Activated CD4-positive, alpha-beta T cell treated with anti-CD3 and anti-CD28 coated beads for 36 hours (primary cell): ENCODE measurements at regions of chr20 and their contacts with region 1.

Region 1: DNA sequence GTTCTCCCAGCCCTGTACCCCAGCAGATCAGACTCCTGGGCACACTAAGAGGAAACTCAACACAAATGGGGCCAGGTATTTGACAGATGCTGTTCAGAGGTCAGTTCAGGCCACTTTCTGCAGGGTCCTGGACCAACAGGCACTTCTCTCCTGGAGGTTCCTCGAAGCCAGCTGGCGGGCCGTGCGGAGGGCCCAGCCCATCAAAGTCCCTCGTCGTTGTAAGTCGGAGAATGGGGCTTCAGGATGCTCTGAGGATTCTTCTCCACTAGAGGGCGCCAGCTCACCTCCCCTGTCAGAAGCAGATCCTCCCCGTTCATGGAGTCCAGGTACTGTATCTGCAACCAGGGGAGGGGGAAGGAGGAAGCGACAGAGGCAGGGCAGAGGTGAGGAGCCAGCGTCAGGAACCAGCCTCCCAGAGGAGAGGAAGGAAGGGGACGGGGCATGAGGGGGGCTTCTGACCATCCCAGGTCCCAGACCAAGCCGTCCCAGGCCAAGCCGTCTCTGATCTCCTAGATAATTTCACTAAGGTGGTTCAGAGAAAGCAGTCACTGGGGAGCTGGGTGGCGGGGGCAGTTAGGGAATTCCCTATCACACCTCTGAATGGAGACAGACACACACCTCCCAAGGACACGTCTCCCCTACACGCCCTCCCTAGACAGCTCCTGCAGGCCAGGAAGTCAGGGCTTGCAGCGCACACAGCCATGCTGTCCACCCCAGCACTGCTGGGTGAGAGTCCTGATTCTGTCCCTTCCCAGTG is 11.7 kb upstream of the FAM83C start:
- DNase-seq: peak; percentile 92
- ATAC-seq: peak; percentile 57
- H3K4me3 Mint-ChIP-seq: no peak overlapping the region
- H3K27ac Mint-ChIP-seq: peak overlapping the region; percentile 93
- H3K4me1 Mint-ChIP-seq: peaks cover 59% of the 10 kb centered on the region
- H3K27me3 Mint-ChIP-seq: no peaks in the 10 kb centered on the region

Region 2: DNA sequence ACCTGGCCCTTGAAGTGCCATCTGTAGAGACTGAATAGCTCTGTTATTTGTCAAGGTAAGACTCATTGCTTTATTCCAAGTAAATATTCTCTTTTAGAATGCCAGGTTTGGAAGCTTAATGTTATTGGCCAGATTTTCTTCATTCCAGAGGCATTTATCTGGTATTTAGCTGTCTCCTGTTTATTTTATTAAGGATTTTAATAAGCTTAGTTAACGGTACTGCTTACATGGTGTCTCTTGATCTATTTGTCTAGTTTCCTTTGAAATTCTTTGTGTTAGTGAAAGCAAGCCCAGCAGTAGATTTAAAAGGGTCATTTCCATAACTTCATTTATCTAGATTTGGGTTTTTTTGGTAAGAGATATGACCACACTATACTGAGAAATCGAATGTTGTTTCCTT is 1302.5 kb before region 1 on chr20:
- CTCF ChIA-PET with region 1: no interaction called
- POLR2A ChIA-PET with region 1: no interaction called
- intact Hi-C with region 1: no loop called
- DNase-seq: no peak
- ATAC-seq: no peak
- H3K4me3 Mint-ChIP-seq: no peak overlapping the region
- H3K27ac Mint-ChIP-seq: no peak overlapping the region
- H3K4me1 Mint-ChIP-seq: peaks cover 84% of the 10 kb centered on the region
- H3K27me3 Mint-ChIP-seq: no peaks in the 10 kb centered on the region

Region 3: GRCh38 chr20:34825530-34826362 is 478.2 kb before region 1 on chr20 and contains the start of gene NCOA6:
- CTCF ChIA-PET with region 1: no interaction called
- POLR2A ChIA-PET with region 1: no interaction called
- intact Hi-C with region 1: loop called in 1 of 2 experiments (anchors 1 kb)
- DNase-seq: peak; percentile 95
- ATAC-seq: peak; percentile 67
- H3K4me3 Mint-ChIP-seq: peak within 1 kb of the TSS; percentile 86
- H3K27ac Mint-ChIP-seq: peak within 1 kb of the TSS; percentile 95
- H3K4me1 Mint-ChIP-seq: peaks cover 30% of the 10 kb centered on the region
- H3K27me3 Mint-ChIP-seq: no peaks in the 10 kb centered on the region
- total RNA-seq, gene NCOA6: 20.3 to 31.1 TPM

Region 4: DNA sequence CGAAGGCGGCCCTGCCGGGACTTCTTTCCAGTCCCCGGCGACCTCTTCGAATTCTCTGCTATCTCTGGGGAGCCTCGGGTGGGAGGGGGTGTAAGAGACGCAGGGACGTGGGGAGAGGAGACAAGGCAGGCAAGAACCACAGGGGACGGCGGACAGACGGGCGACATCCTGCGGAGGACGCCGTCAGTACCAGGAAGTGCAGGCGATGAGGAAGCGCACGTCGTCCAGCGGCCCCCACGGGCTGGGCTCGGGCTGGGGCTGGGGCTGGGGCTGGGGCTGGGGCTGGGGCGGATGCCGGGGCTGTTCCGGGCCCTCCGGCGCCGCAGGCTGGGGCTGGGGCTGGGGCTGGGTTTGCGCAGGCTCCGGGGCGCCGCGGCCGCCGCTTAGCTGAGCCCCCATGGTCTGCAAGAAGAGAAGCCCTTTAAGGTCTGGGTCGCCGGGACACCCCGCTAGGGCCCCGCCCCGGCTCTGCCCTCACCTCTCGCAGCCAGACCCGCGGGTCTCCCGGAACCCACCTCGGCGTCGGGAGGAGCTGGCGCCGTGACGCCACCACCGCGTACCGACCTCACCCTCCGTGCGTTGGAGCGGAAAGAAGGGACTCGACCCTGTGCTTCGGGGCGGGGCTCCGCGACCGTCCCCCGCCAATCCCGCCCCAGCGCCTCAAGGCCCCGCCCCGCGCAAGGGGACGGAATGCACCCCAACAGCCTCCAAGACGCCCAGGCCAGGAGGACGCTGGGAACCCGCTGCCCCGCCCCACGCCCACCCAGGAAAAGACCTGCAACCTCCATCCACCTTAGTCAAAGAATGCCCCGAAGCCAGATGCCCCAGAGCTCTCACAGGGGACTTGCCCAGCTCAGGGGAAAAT is 26.1 kb before region 1 on chr20 and contains the start of gene MMP24OS:
- CTCF ChIA-PET with region 1: interaction called, 5 read pairs
- POLR2A ChIA-PET with region 1: no interaction called
- intact Hi-C with region 1: loop called in 1 of 2 experiments (anchors 2 kb)
- DNase-seq: peak; percentile 94
- ATAC-seq: peak; percentile 96
- H3K4me3 Mint-ChIP-seq: peak within 1 kb of the TSS; percentile 99
- H3K27ac Mint-ChIP-seq: peak within 1 kb of the TSS; percentile 97
- H3K4me1 Mint-ChIP-seq: peaks cover 9% of the 10 kb centered on the region
- H3K27me3 Mint-ChIP-seq: no peaks in the 10 kb centered on the region
- total RNA-seq, gene MMP24OS: 44.6 to 56.8 TPM

Region 5: GRCh38 chr20:35292376-35293285 is 11.3 kb before region 1 on chr20 and contains the start of gene FAM83C:
- CTCF ChIA-PET with region 1: interaction called, 11 read pairs
- POLR2A ChIA-PET with region 1: interaction called, 3 read pairs
- intact Hi-C with region 1: no loop called
- DNase-seq: no peak
- ATAC-seq: no peak
- H3K4me3 Mint-ChIP-seq: no peak within 1 kb of the TSS
- H3K27ac Mint-ChIP-seq: no peak within 1 kb of the TSS
- H3K4me1 Mint-ChIP-seq: no peaks in the 10 kb centered on the region
- H3K27me3 Mint-ChIP-seq: no peaks in the 10 kb centered on the region
- total RNA-seq, gene FAM83C: not detected

Region 6: GRCh38 chr20:35447082-35447789 is 143.3 kb after region 1 on chr20:
- CTCF ChIA-PET with region 1: interaction called, 37 read pairs
- POLR2A ChIA-PET with region 1: no interaction called
- intact Hi-C with region 1: loop called (anchors 1 kb)
- DNase-seq: peak; percentile 95
- ATAC-seq: peak; percentile 99
- H3K4me3 Mint-ChIP-seq: peak overlapping the region; percentile 78
- H3K27ac Mint-ChIP-seq: peak overlapping the region; percentile 58
- H3K4me1 Mint-ChIP-seq: peaks cover 7% of the 10 kb centered on the region
- H3K27me3 Mint-ChIP-seq: no peaks in the 10 kb centered on the region